ENCODE measurements at regions of chr2 and their contacts with region 1.

Region 1: GRCh38 chr2:176522271-176522670 is 253.0 kb downstream of the MTX2 start:
- DNase-seq: no peak
- ATAC-seq: no peak
- H3K4me3 ChIP-seq: no peak overlapping the region
- H3K27ac ChIP-seq: no peak overlapping the region
- H3K4me1 ChIP-seq: peaks cover 0 to 52% (median 15%) of the 10 kb centered on the region in 12 donors
- H3K27me3 ChIP-seq: peaks cover 0 to 5% (median 0%) of the 10 kb centered on the region in 9 donors
- CTCF ChIP-seq: no peak
- POLR2A ChIP-seq: no peak

Region 2: DNA sequence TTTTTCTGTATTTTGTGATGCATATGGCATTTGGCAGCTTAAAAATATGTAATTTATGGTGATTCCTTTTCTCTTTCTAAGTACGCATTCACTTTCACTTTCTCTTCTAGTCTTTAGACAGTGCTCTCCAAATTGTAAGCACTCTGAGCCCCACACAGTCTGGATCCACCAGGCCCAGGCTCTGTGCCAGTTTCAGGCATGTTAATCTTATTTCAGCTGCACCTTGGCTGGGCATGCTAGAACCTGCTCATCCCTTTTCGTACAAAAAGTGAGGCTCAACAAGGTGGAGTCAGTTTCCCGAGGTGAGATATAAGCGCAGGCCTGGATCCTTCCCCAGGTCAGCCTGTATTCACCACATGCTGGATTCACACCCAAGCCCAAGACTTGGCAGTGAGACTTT is 49.1 kb before region 1 on chr2:
- intact Hi-C with region 1: loop called in 1 of 10 experiments (anchors 5 kb)
- DNase-seq: peak in 3 of 5 donors; percentile 27 to 37 (median 35)
- ATAC-seq: peak in 2 of 4 donors; percentile 71 to 75
- H3K4me3 ChIP-seq: peak overlapping the region in 9 of 12 donors; percentile 0 to 36 (median 27)
- H3K27ac ChIP-seq: peak overlapping the region in 3 of 12 donors; percentile 15 to 41 (median 27)
- H3K4me1 ChIP-seq: peaks cover 0 to 12% (median 0%) of the 10 kb centered on the region in 12 donors
- H3K27me3 ChIP-seq: peaks cover 0 to 5% (median 0%) of the 10 kb centered on the region in 9 donors
- CTCF ChIP-seq: no peak
- POLR2A ChIP-seq: no peak

Region 3: DNA sequence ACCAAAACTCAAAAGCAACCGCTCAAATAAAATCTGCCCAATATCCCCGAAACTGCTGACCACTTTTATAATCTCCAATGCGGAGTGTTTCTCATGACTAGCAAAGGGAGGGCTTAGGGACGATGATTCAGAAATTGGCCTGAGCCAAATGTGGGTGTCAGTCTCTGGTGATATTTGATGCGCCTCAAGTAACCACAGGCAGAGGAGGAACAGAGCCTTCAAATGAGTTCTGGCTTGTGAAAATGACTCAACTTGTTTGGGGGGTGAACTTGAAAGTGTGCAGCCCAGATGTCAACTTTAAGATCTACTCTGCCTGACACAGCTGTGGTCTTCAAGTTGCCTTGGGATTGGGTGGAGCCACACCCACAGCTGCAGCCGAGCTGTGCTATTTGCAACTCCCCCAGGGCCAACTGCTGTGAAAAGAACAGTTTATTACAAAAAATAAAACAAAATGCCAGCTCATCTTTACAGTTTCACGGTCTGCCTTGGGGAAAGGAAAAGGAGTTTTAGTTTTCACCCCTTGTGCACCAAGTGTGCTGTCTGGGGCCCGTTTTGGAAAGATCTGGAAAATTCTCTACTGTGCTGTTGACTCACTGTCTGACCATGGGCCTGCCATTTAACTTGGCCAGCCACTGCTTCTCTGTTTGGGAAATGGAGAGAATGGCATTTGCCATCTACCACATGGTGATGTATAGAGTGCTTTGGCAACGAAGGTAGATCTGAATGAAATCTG is 30.9 kb before region 1 on chr2:
- intact Hi-C with region 1: no loop called
- DNase-seq: peak; percentile 53 to 83 (median 72)
- ATAC-seq: peak; percentile 72 to 92 (median 90)
- H3K4me3 ChIP-seq: peak overlapping the region in 1 of 12 donors; percentile 28
- H3K27ac ChIP-seq: peak overlapping the region; percentile 14 to 90 (median 68)
- H3K4me1 ChIP-seq: peaks cover 0 to 60% (median 24%) of the 10 kb centered on the region in 12 donors
- H3K27me3 ChIP-seq: peaks cover 0 to 9% (median 0%) of the 10 kb centered on the region in 9 donors
- CTCF ChIP-seq: no peak
- POLR2A ChIP-seq: no peak

Measured in heart left ventricle (tissue), 16 donors.